ENCODE measurements at regions of chr16 and their contacts with region 1.

Region 1: DNA sequence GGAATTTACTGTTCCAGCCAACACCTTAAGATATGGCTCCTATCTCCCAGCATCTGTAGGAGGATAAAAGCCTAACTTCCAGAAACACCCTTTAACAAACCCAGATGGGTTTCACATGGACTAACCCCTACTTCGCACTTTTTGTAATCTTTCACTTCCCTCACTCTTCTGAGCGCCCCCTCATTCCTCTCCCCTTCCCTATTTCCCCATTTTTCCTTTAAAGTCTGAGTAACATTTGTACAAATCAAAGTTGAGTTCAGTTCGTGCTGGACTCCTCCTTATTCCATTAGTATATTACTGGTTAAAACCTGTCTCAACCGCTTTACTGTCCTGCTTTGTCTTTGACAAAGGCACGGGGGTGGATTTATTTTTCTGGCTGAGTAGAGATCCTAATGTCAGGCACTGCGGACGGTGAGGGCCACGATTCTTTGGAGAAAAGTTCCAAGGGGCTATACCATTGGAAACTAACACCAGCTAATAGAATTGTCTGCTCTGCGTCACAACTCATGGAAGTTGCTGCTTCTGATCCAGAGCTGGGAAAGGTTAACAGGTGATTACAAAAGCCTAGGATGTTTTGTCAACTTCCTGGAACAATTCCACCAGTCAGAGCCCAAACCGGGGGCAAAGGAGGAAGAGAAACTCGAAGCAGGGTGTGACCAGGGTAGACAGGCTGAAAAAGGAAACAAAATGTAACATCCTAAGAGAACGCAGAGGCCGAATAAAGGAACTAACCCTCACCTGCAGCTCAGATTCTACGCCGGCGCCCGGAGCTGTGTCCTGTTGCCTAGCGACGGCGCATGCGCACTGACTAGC is 12.5 kb downstream of the TAT start:
- DNase-seq: no peak
- H3K4me3 Mint-ChIP-seq: peak overlapping the region; percentile 85
- H3K27ac Mint-ChIP-seq: peak overlapping the region; percentile 88
- H3K4me1 Mint-ChIP-seq: peaks cover 18% of the 10 kb centered on the region
- H3K27me3 Mint-ChIP-seq: peaks cover 2% of the 10 kb centered on the region

Region 2: DNA sequence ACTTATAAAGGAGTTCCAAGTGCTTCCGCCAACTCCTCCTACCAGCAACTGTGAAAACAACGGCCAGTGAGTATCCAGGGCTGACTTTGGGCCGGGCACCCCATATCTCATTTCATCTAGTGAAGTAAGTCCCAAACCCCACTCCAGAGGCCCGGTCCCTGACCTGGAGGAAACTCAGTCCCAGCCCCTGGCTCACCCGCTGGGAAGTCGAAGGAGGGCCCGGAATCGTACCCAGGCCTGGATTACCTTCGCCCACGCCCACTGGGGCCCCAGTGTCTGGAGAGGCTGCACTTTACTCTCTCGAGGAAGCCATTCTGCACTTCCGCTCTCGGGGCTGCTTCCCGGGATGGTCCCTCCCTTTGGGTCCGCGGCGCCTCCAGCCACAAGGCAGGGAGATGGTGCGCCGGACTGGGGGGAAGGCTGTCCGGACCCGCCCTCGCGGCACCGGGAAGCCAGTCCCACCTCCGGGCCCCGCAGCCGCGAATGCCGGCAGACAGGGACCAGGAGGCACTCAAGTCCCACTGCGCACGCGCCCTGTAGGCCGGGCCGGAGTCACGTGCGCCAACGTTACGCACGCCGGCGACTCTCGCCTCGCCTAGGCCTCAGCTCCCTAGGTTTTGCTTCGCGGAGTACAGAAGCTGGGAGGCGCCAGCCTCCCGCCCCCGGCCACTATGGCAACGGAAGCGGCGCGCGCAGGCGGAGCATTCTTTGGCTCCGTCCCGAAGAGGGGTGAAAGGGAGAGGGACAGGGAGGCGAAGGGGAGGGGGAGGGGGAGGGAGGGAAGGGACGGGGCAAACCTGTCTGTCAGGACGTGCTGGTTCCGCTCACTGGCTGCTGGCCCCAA is 275.2 kb before region 1 on chr16 and contains the start of gene CMTR2:
- intact Hi-C with region 1: loop called (anchors 1 kb)
- DNase-seq: peak; percentile 89
- H3K4me3 Mint-ChIP-seq: peak within 1 kb of the TSS; percentile 93
- H3K27ac Mint-ChIP-seq: peak within 1 kb of the TSS; percentile 90
- H3K4me1 Mint-ChIP-seq: peaks cover 26% of the 10 kb centered on the region
- H3K27me3 Mint-ChIP-seq: peaks cover 13% of the 10 kb centered on the region
- total RNA-seq, gene CMTR2: 18.2 and 20.7 TPM in 2 replicates

Region 3: GRCh38 chr16:71484006-71484893 is 80.1 kb before region 1 on chr16:
- intact Hi-C with region 1: loop called (anchors 1 kb)
- DNase-seq: peak; percentile 67
- H3K4me3 Mint-ChIP-seq: peak overlapping the region; percentile 86
- H3K27ac Mint-ChIP-seq: peak overlapping the region; percentile 75
- H3K4me1 Mint-ChIP-seq: peaks cover 18% of the 10 kb centered on the region
- H3K27me3 Mint-ChIP-seq: no peaks in the 10 kb centered on the region

Region 4: DNA sequence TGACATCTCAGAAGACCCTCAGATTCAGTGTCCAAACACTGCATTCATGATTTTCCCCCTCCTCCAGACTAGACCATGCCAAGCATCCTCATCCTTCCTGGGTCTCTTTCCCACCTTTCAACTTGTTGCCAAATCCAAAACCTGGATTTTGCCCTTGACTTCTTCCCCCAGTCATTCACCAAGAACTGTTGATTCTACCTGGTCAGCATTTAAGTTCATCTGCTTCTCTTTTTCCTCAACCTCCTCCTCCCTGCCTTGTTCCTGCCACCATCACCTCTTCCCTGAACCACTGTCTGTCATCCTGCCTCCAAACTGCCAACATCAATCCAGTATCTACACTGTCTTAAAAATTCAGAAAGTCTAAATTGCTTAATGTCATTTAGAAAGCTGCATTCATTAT is 17.2 kb before region 1 on chr16:
- intact Hi-C with region 1: no loop called
- DNase-seq: no peak
- H3K4me3 Mint-ChIP-seq: no peak overlapping the region
- H3K27ac Mint-ChIP-seq: no peak overlapping the region
- H3K4me1 Mint-ChIP-seq: peaks cover 4% of the 10 kb centered on the region
- H3K27me3 Mint-ChIP-seq: peaks cover 13% of the 10 kb centered on the region

Region 5: DNA sequence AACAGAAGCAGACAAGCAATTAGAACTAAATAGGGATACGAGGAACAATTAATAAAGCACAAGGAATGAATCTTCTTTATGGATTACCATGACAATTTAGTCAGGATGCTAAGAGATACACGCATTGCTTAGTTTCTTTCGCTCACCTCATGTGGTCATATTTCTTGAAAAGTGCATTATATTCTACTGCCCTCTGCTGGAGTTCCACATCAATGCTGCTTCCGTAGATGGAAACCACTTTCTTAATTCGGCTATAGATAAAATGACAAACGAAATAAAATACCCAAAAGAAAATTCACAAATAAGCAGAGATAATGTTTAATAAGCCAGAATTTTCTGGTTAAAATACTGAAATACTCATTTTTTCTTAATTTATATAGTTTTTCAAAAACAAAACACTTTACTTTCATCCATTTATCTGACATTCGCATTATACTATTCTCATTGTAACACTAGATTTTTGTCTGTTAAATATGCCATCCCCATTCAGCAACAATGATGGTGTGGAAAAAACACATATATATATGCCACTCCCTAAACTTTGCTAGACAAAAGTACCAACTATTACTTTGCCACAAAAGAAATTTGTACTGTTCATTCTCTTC is 182.2 kb after region 1 on chr16:
- intact Hi-C with region 1: loop called (anchors 1 kb)
- DNase-seq: no peak
- H3K4me3 Mint-ChIP-seq: no peak overlapping the region
- H3K27ac Mint-ChIP-seq: no peak overlapping the region
- H3K4me1 Mint-ChIP-seq: peaks cover 5% of the 10 kb centered on the region
- H3K27me3 Mint-ChIP-seq: no peaks in the 10 kb centered on the region

Region 6: DNA sequence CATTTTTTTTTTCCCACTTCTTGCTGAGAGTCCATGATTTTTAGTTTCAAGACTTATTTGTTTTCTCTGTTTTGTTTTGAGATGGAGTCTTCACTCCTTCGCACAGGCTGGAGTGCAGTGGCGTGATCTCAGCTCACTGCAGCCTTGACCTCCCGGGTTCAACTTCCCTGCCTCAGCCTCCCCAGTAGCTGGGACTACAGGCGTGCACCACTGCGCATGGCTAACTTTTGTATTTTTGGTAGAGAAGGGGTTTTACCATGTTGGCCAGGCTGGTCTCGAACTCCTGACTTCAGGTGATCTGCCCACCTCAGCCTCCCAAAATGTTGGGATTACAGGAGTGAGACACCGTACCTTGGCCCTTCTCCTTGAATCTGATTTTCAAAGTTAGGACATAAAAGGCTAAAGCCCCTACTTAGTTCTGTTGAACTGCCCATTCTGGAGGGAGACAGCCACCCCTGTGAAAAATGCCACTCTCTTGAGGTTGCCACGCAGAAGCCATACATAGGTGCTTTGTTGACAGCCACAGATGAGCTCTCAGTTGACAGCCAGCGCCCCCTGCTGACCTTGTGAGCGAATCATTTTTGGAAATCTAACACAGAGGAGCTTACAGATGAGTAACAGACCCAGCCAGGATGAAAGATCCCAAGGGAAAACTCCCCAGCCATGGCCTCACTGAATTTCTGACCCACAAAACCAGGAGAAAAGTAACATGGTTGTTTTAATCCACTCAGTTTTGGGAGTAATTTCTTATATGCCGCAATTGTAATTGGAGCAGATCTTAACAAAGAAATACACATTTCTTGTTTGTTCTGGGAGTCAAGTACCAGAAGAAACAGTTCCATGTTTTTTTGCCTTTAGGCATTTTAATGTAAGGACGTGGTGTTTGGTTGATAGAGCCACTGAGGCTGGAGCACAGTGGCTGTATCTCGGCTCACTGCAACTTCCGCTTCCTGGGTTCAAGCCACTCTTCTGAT is 397.0 kb after region 1 on chr16:
- intact Hi-C with region 1: loop called (anchors 1 kb)
- DNase-seq: peak; percentile 70
- H3K4me3 Mint-ChIP-seq: no peak overlapping the region
- H3K27ac Mint-ChIP-seq: no peak overlapping the region
- H3K4me1 Mint-ChIP-seq: peaks cover 9% of the 10 kb centered on the region
- H3K27me3 Mint-ChIP-seq: peaks cover 4% of the 10 kb centered on the region

Region 7: DNA sequence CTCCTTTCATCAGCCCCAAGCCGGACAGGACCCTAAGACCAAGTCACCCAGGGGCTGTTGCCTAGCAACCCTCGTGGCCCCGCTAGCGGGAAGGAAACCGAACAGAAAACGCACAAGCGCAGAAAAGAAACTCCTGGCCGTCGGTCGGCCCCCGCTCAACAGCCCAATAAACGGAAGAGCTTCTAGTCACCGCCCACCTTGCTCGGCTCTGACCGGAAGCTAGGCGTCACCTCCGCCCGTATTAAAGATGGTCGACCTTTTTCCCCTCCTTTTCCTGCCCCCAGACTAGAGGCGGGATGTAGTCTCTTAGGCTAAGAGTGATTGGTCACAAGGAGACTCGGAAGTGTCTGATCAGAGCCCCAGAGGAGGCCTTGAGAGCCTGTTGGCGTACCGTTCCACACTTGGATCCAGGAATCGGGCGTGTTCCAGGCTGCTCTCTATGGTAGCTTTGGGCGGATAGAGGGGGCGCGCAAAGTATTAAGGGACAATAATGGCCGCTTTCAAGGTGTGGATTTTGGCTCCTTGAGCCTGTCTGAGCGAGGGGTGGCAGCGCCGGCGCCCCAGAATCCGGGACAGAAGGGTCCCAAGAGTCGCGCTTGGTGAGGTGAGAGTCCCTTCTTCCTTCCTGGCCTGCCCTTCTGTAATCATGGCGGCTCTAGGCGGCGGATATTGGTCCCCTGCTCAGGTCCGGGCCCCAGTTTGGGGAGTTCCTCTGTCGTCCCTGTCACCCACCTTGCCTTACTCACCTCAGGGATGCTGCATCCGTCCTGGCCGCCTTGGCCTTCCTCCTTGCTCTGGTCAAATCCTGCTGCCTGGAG is 529.3 kb after region 1 on chr16 and contains the starts of genes DHX38 and TXNL4B:
- intact Hi-C with region 1: loop called (anchors 1 kb)
- DNase-seq: peak; percentile 92
- H3K4me3 Mint-ChIP-seq: peak within 1 kb of the TSS; percentile 99
- H3K27ac Mint-ChIP-seq: peak within 1 kb of the TSS; percentile 99
- H3K4me1 Mint-ChIP-seq: peaks cover 64% of the 10 kb centered on the region
- H3K27me3 Mint-ChIP-seq: no peaks in the 10 kb centered on the region
- total RNA-seq, gene DHX38: 89.8 and 99.4 TPM in 2 replicates
- total RNA-seq, gene TXNL4B: 24.0 and 25.1 TPM in 2 replicates